Heart right ventricle (tissue), 16 donors: ENCODE measurements at regions of chr7 and their contacts with region 1.

Region 1: DNA sequence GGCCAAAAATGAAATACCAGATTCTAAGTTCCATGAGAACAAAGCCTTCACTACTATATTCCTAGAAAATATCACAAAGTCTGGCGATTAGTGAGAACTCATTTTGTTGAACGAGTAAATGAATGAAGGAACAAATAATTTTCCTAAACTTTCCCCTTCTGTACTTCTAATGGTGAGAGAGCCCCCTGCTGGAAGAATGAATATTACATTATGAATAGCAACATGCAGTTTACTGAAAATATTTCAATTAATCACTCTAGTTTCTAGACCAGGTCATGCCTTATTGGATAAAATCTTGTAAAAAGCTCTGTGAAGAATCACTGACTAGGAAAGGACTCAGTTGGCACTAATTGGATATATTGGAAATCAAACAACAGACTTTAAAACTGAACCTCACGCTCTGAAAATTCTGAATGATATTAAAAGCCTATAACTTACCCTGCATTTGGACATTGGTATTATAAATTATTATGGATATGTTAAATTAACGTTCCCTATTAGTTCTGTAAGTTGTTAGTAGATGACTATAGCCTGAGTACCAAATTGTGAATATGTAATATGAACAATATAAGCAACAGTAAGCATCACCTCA is 32.4 kb upstream of the MTPN start:
- DNase-seq: no peak
- ATAC-seq: no peak
- H3K4me3 ChIP-seq: no peak overlapping the region
- H3K27ac ChIP-seq: no peak overlapping the region
- H3K4me1 ChIP-seq: peaks cover 0 to 2% (median 0%) of the 10 kb centered on the region in 9 donors
- H3K27me3 ChIP-seq: no peaks in the 10 kb centered on the region
- CTCF ChIP-seq: peak; percentile 58 to 88 (median 77)

Region 2: DNA sequence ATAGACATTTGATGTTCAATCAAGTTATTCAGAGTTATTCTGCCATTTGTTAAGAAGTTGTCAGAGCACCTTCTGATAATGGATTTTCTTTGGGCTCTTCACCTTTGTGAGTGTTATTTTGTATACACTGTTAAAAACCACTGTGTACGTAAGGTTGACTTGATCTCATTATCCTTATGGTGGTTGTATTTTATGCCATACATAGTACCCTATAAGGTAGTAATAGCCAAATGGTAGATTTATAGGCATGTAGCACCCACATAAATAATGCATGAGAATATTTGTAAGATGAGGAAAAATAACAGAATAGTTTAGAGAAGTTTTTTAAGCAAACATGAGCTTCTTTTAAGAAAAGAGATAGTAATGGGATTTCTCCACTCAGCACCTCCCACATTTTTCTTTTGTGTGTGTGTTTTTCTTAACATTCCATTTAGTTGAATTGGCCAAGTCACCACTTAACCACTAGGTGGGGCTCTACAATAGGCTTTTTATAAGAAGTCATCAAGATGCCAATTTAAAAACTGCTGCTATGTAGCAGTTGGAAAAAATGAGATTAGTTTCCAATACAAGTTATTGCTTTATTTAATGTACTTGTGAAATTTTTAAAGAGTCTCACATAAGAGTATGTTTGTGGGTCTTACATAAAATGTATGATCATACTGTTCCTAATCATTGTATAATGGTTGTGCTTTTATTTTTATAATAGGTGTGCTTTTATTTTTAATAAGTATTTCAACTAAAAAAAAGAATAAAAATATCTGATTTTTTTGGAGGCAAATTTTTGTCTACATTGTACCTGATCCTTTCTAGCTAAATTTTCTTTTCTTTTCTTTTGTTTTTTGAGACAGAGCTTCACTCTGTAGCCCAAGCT is 388.4 kb before region 1 on chr7:
- intact Hi-C with region 1: loop called in 1 of 10 experiments (anchors 5 kb)
- DNase-seq: peak in 1 of 2 donors; percentile 52
- ATAC-seq: peak in 6 of 8 donors; percentile 38 to 69 (median 50)
- H3K4me3 ChIP-seq: no peak overlapping the region
- H3K27ac ChIP-seq: no peak overlapping the region
- H3K4me1 ChIP-seq: peaks cover 0 to 9% (median 0%) of the 10 kb centered on the region in 9 donors
- H3K27me3 ChIP-seq: no peaks in the 10 kb centered on the region
- CTCF ChIP-seq: peak; percentile 70 to 93 (median 90)

Region 3: DNA sequence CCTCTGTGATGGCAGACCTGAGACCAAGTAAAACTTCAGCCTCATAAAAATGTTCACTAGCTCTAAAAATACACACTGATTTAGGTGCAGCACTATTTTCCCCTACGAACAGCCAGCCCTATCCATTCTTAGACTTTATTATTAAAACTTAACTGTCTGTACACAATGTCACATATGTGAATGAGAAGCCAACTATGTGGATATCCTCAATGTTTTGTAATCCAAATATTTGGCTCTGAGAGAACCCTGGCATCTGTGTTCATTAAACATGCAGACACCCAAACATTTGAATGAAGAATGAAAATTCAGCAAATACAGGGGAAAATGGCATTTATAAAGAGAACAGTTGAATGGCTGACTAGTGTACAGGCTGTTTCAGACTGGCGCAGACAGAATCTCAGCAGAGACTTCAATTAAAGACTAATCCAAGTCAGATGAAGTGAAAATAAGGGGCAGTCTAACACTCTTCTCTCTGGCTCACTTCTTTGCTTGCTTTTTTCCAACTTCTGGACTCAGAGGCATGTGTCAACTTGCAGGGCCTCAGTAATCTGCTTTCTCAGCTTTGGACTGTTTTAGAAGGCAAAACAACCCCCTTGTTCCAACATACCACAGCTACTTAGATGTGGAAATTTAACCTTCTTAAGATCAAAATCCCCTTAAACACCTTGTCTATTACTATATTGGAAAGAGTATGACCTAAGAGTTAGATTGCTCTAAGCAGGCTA is 213.6 kb before region 1 on chr7:
- intact Hi-C with region 1: loop called in 8 of 10 experiments (anchors 1 to 5 kb)
- DNase-seq: no peak
- ATAC-seq: peak in 1 of 8 donors; percentile 34
- H3K4me3 ChIP-seq: no peak overlapping the region
- H3K27ac ChIP-seq: peak overlapping the region in 4 of 10 donors; percentile 34 to 57 (median 45)
- H3K4me1 ChIP-seq: peaks cover 0 to 35% (median 13%) of the 10 kb centered on the region in 9 donors
- H3K27me3 ChIP-seq: no peaks in the 10 kb centered on the region
- CTCF ChIP-seq: no peak

Region 4: GRCh38 chr7:135801045-135801693 is 208.4 kb before region 1 on chr7:
- intact Hi-C with region 1: loop called (anchors 1 to 5 kb)
- DNase-seq: peak in 1 of 2 donors; percentile 50
- ATAC-seq: peak; percentile 51 to 75 (median 64)
- H3K4me3 ChIP-seq: peak overlapping the region in 4 of 10 donors; percentile 11 to 14 (median 13)
- H3K27ac ChIP-seq: no peak overlapping the region
- H3K4me1 ChIP-seq: peaks cover 2 to 27% (median 13%) of the 10 kb centered on the region in 9 donors
- H3K27me3 ChIP-seq: no peaks in the 10 kb centered on the region
- CTCF ChIP-seq: peak; percentile 77 to 96 (median 87)

Region 5: GRCh38 chr7:136074831-136075230 is 65.2 kb after region 1 on chr7:
- intact Hi-C with region 1: no loop called
- DNase-seq: no peak
- ATAC-seq: no peak
- H3K4me3 ChIP-seq: no peak overlapping the region
- H3K27ac ChIP-seq: no peak overlapping the region
- H3K4me1 ChIP-seq: peaks cover 0 to 5% (median 0%) of the 10 kb centered on the region in 9 donors
- H3K27me3 ChIP-seq: no peaks in the 10 kb centered on the region
- CTCF ChIP-seq: no peak